GM12878 (cell line): ENCODE measurements at regions of chr11 and their contacts with region 1.

Region 1: GRCh38 chr11:42098075-42098474 is 638.6 kb upstream of the LRRC4C start:
- DNase-seq: no peak
- ATAC-seq: no peak
- H3K4me3 ChIP-seq: no peak overlapping the region
- H3K27ac ChIP-seq: no peak overlapping the region
- H3K4me1 ChIP-seq: no peaks in the 10 kb centered on the region
- H3K27me3 ChIP-seq: no peaks in the 10 kb centered on the region
- CTCF ChIP-seq: no peak
- EP300 ChIP-seq: no peak
- POLR2A ChIP-seq: no peak
- RAD21 ChIP-seq: no peak

Region 2: DNA sequence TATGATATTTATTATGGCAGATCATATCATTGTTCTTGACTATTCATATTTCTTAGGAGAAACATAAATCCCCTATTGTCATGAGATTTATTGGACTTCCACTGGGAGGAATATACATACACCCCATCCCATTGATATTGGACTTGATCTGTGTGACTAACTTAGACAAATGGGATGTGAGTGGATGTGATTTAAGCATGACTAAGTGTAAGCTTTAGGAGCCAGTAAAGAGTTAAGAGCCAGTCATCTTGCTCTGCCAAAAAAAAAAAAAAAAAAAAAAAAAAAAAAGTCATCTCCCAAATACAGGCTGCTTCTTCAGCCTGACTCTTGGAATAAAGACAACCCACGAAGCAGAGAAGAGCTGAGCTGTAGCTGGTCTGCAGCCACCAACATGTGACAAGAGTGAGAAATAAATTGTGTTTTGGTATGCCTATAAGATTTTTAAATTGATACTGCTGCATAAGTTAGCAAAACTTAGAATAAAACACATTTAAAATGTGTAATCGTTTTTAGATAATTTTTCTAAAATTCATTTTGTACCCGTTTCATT is 43.6 kb before region 1 on chr11:
- CTCF ChIA-PET with region 1: no interaction called
- POLR2A ChIA-PET with region 1: no interaction called
- RAD21 ChIA-PET with region 1: no interaction called
- SMC1A ChIA-PET with region 1: no interaction called
- in situ Hi-C with region 1: no loop called
- intact Hi-C with region 1: loop called (anchors 5 kb)
- DNase-seq: no peak
- ATAC-seq: no peak
- H3K4me3 ChIP-seq: no peak overlapping the region
- H3K27ac ChIP-seq: no peak overlapping the region
- H3K4me1 ChIP-seq: no peaks in the 10 kb centered on the region
- H3K27me3 ChIP-seq: no peaks in the 10 kb centered on the region
- CTCF ChIP-seq: no peak
- EP300 ChIP-seq: no peak
- POLR2A ChIP-seq: no peak
- RAD21 ChIP-seq: no peak

Region 3: DNA sequence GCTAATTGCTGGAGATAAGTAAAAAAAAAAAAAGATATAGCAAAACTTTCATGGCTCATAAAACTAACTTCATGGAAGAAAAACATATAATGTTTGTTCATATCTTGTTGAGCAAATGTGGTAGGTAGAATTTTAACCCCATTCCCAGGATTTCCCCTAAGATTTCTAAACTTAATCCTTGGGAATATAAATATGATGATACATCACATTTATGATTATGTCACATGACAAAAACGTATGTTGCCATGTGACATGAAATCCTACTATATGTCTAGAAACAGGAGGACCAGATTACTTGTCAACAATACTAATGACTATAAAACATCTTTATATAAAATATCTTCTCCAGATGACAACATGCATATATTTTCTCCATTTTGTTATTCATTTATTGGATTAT is 40.4 kb after region 1 on chr11:
- CTCF ChIA-PET with region 1: no interaction called
- POLR2A ChIA-PET with region 1: no interaction called
- RAD21 ChIA-PET with region 1: no interaction called
- SMC1A ChIA-PET with region 1: no interaction called
- in situ Hi-C with region 1: no loop called
- intact Hi-C with region 1: no loop called
- DNase-seq: no peak
- ATAC-seq: no peak
- H3K4me3 ChIP-seq: no peak overlapping the region
- H3K27ac ChIP-seq: no peak overlapping the region
- H3K4me1 ChIP-seq: no peaks in the 10 kb centered on the region
- H3K27me3 ChIP-seq: no peaks in the 10 kb centered on the region
- CTCF ChIP-seq: no peak
- EP300 ChIP-seq: no peak
- POLR2A ChIP-seq: no peak
- RAD21 ChIP-seq: no peak

Region 4: DNA sequence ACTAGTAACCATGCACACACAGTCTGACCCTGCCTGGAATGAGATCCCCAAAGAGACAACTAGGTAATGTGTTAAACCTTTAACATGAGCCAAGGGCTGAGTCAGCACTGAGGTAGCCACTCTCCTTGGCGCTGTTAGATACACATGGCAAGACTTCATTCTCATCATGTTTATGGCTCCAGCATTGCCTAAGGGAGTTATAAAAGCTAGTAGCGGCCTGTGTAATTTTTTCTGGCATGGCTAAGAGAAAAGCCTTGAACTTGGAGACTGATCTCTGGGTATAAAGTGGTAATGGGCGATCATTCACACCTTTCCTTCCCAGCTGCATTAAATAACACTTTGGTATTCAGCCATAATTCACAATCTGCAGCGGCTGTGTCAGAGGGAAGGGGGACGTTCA is 141.1 kb after region 1 on chr11:
- CTCF ChIA-PET with region 1: no interaction called
- POLR2A ChIA-PET with region 1: no interaction called
- RAD21 ChIA-PET with region 1: no interaction called
- SMC1A ChIA-PET with region 1: no interaction called
- in situ Hi-C with region 1: no loop called
- intact Hi-C with region 1: no loop called
- DNase-seq: no peak
- ATAC-seq: no peak
- H3K4me3 ChIP-seq: no peak overlapping the region
- H3K27ac ChIP-seq: no peak overlapping the region
- H3K4me1 ChIP-seq: no peaks in the 10 kb centered on the region
- H3K27me3 ChIP-seq: no peaks in the 10 kb centered on the region
- CTCF ChIP-seq: no peak
- EP300 ChIP-seq: no peak
- POLR2A ChIP-seq: no peak
- RAD21 ChIP-seq: no peak